ENCODE measurements at regions of chr2 and their contacts with region 1.

Region 1: DNA sequence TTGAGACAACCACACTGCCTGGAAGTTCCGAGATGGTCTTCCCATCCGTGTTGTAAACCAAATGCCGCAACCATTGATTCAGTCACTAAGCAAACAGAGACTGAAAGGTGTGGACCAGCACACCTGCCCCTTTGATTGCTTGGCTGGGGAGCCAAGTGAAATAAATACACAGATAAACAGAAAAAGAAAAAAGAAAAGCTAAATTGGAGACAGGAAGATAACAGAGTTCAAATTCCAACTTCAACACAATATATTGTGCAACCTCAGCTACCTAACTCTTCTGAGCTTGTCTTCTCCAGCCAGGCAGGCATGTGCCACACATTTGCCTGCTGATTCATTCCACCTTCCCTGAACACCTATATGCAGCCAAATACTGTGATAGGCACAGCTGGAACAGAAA is 110.9 kb downstream of the PID1 start:
- DNase-seq: peak; percentile 74 to 81
- H3K4me3 ChIP-seq: no peak overlapping the region
- H3K4me3 Mint-ChIP-seq: peak overlapping the region; percentile 65
- H3K27ac Mint-ChIP-seq: peak overlapping the region; percentile 93
- H3K4me1 ChIP-seq: peaks cover 29% of the 10 kb centered on the region
- H3K4me1 Mint-ChIP-seq: peaks cover 25% of the 10 kb centered on the region
- H3K27me3 ChIP-seq: no peaks in the 10 kb centered on the region
- H3K27me3 Mint-ChIP-seq: no peaks in the 10 kb centered on the region
- CTCF ChIP-seq: no peak

Region 2: DNA sequence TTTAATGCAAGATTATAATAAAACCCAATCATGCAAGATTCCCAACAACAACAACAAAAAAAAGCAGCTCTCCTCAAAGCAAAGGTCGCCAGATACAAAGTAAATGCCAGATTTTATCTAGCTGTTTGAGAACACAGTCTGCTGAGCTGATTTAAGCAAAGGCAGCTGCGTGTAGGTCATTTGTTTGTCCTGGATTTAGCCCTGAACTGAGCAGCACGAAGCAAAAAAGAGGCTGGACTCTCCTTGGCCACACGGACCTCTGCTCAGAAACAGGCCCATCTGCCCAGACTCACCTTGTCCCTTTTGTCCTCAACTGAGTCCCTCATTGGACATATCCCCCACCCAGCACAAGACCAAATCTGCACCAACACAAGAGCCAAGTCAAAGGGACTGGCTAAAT is 19.4 kb after region 1 on chr2:
- CTCF ChIA-PET with region 1: interaction called, 3 read pairs
- POLR2A ChIA-PET with region 1: no interaction called
- intact Hi-C with region 1: loop called (anchors 2 kb)
- DNase-seq: peak in 1 of 2 experiments; percentile 24
- H3K4me3 ChIP-seq: no peak overlapping the region
- H3K4me3 Mint-ChIP-seq: peak overlapping the region; percentile 16
- H3K27ac Mint-ChIP-seq: peak overlapping the region; percentile 64
- H3K4me1 ChIP-seq: peaks cover 10% of the 10 kb centered on the region; the same call in 1 of the 2 replicates
- H3K4me1 Mint-ChIP-seq: peaks cover 22% of the 10 kb centered on the region
- H3K27me3 ChIP-seq: no peaks in the 10 kb centered on the region
- H3K27me3 Mint-ChIP-seq: no peaks in the 10 kb centered on the region
- CTCF ChIP-seq: no peak

Region 3: DNA sequence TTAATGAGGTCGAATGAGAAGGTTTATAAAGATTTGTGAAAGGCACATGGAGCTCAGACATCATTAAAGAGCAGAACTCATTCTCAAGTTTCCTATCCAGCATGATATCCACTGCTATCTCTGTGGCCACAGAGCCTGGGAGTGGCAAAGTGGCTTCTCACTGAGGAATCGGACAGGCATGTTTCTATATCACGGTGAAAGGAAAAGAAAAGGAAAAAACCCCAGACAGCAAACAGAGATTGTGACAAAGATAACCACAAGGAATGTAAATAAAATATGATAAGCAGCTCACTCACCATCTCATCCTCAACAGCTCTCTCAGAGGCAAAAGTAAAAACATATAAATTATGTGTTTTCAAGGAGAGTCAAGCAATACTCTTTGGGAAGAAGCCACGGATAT is 108.4 kb after region 1 on chr2:
- CTCF ChIA-PET with region 1: interaction called, 6 read pairs
- POLR2A ChIA-PET with region 1: interaction called, 7 read pairs
- intact Hi-C with region 1: loop called (anchors 1 kb)
- DNase-seq: peak in 1 of 2 experiments; percentile 24
- H3K4me3 ChIP-seq: no peak overlapping the region
- H3K4me3 Mint-ChIP-seq: peak overlapping the region; percentile 10
- H3K27ac Mint-ChIP-seq: no peak overlapping the region
- H3K4me1 ChIP-seq: peaks cover 19% of the 10 kb centered on the region
- H3K4me1 Mint-ChIP-seq: peaks cover 14% of the 10 kb centered on the region
- H3K27me3 ChIP-seq: no peaks in the 10 kb centered on the region
- H3K27me3 Mint-ChIP-seq: no peaks in the 10 kb centered on the region
- CTCF ChIP-seq: no peak

Region 4: DNA sequence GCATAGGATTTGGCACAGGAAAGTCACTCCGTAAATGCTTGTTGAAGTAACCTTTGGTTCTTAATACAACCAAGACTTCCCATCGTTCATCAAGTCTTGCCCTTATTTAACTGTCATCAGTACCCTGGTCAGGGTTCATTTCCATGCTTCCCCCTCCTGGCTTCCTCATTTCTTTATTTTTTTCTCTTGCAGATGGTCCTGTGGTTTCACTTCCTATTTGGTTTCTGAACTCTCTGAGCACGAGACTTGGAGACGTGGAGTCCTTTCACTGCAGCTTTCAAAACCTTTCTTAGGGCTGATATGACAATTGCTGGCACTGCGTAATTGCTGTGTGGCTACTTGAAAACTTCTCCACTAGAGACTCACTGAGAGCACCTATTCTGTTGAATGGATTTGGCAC is 170.8 kb after region 1 on chr2:
- CTCF ChIA-PET with region 1: no interaction called
- POLR2A ChIA-PET with region 1: no interaction called
- intact Hi-C with region 1: no loop called
- DNase-seq: no peak
- H3K4me3 ChIP-seq: no peak overlapping the region
- H3K4me3 Mint-ChIP-seq: no peak overlapping the region
- H3K27ac Mint-ChIP-seq: no peak overlapping the region
- H3K4me1 ChIP-seq: no peaks in the 10 kb centered on the region
- H3K4me1 Mint-ChIP-seq: no peaks in the 10 kb centered on the region
- H3K27me3 ChIP-seq: no peaks in the 10 kb centered on the region
- H3K27me3 Mint-ChIP-seq: no peaks in the 10 kb centered on the region
- CTCF ChIP-seq: no peak

Region 5: DNA sequence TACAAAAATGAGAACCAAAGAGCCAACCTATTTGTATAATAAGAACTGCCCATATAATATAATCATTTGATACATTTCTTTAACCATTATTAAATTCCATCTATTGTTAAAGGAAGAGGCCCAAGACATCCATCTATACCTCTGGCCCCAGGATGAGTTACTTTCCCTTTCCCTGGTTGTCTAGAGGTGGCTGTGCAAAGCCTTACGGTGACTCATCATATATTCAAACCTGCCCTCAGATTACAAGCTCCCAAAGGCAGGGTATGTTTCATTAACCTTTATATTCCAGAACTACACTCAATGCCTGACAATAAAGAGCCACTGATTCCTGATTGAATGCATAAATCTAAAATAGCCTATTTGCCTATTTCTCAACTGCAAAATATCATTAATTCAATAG is 216.7 kb after region 1 on chr2:
- CTCF ChIA-PET with region 1: no interaction called
- POLR2A ChIA-PET with region 1: no interaction called
- intact Hi-C with region 1: no loop called
- DNase-seq: no peak
- H3K4me3 ChIP-seq: no peak overlapping the region
- H3K4me3 Mint-ChIP-seq: no peak overlapping the region
- H3K27ac Mint-ChIP-seq: no peak overlapping the region
- H3K4me1 ChIP-seq: no peaks in the 10 kb centered on the region
- H3K4me1 Mint-ChIP-seq: no peaks in the 10 kb centered on the region
- H3K27me3 ChIP-seq: no peaks in the 10 kb centered on the region
- H3K27me3 Mint-ChIP-seq: peaks cover 3% of the 10 kb centered on the region
- CTCF ChIP-seq: no peak